PC-9 (cell line): ENCODE measurements at regions of chr6 and their contacts with region 1.

Region 1: GRCh38 chr6:52995913-52996645 is 995 bp upstream of the GSTA4 start:
- DNase-seq: peak; percentile 42 to 74
- H3K4me3 ChIP-seq: peak overlapping the region; percentile 57
- H3K27ac ChIP-seq: no peak overlapping the region
- H3K4me1 ChIP-seq: peaks cover 25% of the 10 kb centered on the region
- H3K27me3 ChIP-seq: no peaks in the 10 kb centered on the region
- CTCF ChIP-seq: no peak

Region 2: DNA sequence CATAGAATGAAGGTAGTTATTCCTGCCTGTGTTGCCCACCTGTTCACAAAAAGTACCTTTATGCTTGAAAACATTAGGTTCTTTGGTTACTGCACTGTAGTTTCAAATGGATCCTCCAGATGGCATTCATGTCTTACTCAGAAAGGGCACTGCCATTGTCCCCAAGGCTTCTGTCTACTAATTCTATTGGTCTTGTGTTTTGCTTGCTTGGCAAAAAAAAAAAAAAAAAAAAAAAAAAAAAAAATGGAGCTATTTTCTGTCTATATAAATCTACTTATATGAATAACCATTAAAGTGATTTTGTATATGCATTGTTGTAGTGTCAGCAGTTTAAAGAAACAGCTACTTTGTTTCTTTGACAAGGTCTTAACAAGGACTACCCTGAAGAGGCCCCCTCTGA is 588.6 kb before region 1 on chr6:
- CTCF ChIA-PET with region 1: no interaction called
- POLR2A ChIA-PET with region 1: no interaction called
- intact Hi-C with region 1: loop called (anchors 2 kb)
- DNase-seq: peak; percentile 17 to 62
- H3K4me3 ChIP-seq: no peak overlapping the region
- H3K27ac ChIP-seq: no peak overlapping the region
- H3K4me1 ChIP-seq: no peaks in the 10 kb centered on the region
- H3K27me3 ChIP-seq: no peaks in the 10 kb centered on the region
- CTCF ChIP-seq: peak; percentile 77

Region 3: DNA sequence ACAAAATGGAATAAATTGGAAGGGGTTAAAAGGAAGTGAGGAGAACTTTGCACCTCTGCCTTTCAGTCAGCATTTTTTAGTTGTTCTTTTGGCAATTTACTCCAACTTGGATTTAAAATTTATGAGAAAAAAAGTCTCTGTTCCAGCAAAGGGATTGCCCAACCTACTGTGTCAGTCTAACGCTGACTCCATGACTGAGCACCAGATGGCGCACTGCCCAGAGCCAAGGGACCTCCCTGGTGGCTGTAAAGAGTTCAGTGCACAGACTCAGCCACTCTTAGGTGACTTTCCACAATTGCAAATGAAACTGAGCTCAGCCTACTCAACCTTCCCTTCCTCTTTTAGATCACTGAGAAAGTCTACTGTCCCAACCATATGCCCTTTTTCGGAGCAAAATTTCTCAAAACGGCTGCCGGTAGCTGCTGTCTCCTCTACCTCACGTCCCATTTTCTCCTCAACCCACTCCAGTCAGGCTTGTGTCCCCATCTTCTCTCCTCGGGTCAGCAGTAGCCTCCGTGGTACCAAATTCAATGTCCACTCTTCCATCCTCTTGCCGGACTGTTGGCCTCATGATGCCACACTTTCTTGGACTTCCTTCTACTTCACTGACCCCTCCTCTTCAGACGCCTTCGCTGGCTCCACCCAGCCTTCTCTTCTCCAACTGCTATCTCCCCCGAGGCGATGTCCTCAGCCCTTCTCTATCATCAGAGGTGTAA is 271.5 kb before region 1 on chr6:
- CTCF ChIA-PET with region 1: no interaction called
- POLR2A ChIA-PET with region 1: no interaction called
- intact Hi-C with region 1: loop called (anchors 1 kb)
- DNase-seq: peak; percentile 39 to 40
- H3K4me3 ChIP-seq: no peak overlapping the region
- H3K27ac ChIP-seq: peak overlapping the region; percentile 89
- H3K4me1 ChIP-seq: peaks cover 34% of the 10 kb centered on the region
- H3K27me3 ChIP-seq: no peaks in the 10 kb centered on the region
- CTCF ChIP-seq: peak; percentile 70

Region 4: GRCh38 chr6:52881996-52882841 is 113.9 kb before region 1 on chr6:
- CTCF ChIA-PET with region 1: interaction called, 4 read pairs
- POLR2A ChIA-PET with region 1: no interaction called
- intact Hi-C with region 1: loop called (anchors 1 kb)
- DNase-seq: peak; percentile 63 to 67
- H3K4me3 ChIP-seq: peak overlapping the region; percentile 55; the same call in 1 of the 2 replicates
- H3K27ac ChIP-seq: no peak overlapping the region
- H3K4me1 ChIP-seq: peaks cover 6% of the 10 kb centered on the region
- H3K27me3 ChIP-seq: no peaks in the 10 kb centered on the region
- CTCF ChIP-seq: peak; percentile 86

Region 5: GRCh38 chr6:52922161-52922560 is 73.9 kb before region 1 on chr6:
- CTCF ChIA-PET with region 1: no interaction called
- POLR2A ChIA-PET with region 1: no interaction called
- intact Hi-C with region 1: loop called (anchors 1 kb)
- DNase-seq: no peak
- H3K4me3 ChIP-seq: no peak overlapping the region
- H3K27ac ChIP-seq: no peak overlapping the region
- H3K4me1 ChIP-seq: peaks cover 39% of the 10 kb centered on the region
- H3K27me3 ChIP-seq: no peaks in the 10 kb centered on the region
- CTCF ChIP-seq: no peak

Region 6: DNA sequence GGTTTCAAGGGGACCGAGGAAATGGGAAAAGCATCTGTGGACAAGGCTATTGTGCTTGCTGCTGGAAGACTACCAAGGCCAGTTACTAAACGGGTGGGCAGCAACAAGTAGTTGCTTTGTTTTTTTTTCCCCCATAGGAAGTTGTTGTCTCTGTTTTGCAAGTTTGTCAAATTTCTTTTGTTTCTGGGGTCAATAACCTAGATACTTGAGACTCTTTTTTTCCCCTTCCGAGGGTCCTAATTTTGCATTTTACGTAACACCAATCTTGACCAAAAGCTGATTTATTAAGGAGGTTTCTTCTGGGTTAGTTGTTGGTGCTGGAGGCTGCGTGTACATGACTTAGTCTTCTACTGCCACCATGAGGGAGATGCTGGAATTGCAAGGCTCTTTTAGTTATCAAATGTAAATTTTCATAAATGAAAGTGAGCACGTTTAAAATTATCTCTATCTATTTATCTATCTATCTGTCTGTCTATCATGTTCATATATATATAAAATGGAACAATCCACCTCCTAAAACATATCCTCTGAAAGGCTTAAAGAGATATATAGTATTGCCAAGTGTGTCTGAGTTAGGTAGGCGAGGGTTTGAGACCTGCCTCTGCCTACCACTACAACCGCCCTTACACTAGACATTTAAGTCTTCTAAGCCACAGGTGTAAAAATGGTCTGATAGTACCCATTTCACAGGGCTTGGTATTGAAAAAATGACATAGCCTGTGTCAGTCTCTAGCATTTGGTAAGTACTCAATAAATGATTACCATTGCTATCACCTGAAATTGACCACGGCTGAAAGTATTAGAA is 488.6 kb after region 1 on chr6:
- CTCF ChIA-PET with region 1: no interaction called
- POLR2A ChIA-PET with region 1: no interaction called
- intact Hi-C with region 1: loop called (anchors 1 kb)
- DNase-seq: peak in 1 of 2 experiments; percentile 42
- H3K4me3 ChIP-seq: no peak overlapping the region
- H3K27ac ChIP-seq: no peak overlapping the region
- H3K4me1 ChIP-seq: no peaks in the 10 kb centered on the region
- H3K27me3 ChIP-seq: no peaks in the 10 kb centered on the region
- CTCF ChIP-seq: peak; percentile 98